PC-9 (cell line): ENCODE measurements at regions of chr2 and their contacts with region 1.

Region 1: GRCh38 chr2:31762085-31762484 is 181.3 kb upstream of the SRD5A2 start:
- DNase-seq: no peak
- H3K4me3 ChIP-seq: no peak overlapping the region
- H3K27ac ChIP-seq: no peak overlapping the region
- H3K4me1 ChIP-seq: no peaks in the 10 kb centered on the region
- H3K27me3 ChIP-seq: no peaks in the 10 kb centered on the region
- CTCF ChIP-seq: no peak

Region 2: DNA sequence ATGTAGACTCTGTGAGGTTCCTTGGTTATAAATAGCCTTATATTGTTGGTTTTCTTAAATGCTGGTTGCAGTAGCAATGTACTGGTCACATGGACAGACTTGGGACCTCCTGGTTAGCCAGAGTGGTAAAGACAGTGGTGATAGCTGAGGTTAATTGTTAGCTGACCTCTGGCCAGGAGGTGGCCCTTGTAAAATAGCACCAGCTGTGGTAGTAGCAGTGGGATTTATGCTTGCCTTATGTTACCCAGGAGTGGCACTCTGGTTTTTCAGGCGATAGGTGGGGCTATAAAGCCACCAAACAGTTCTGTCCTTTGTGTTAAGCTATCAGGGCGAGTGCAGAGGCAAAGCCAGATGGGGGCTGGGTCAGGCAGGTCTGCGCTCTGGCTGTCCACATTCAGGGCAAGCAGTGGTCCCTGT is 86.6 kb before region 1 on chr2:
- CTCF ChIA-PET with region 1: no interaction called
- POLR2A ChIA-PET with region 1: no interaction called
- intact Hi-C with region 1: no loop called
- DNase-seq: peak in 1 of 2 experiments; percentile 6
- H3K4me3 ChIP-seq: no peak overlapping the region
- H3K27ac ChIP-seq: no peak overlapping the region
- H3K4me1 ChIP-seq: no peaks in the 10 kb centered on the region
- H3K27me3 ChIP-seq: no peaks in the 10 kb centered on the region
- CTCF ChIP-seq: 0 out of 2 replicates have a peak, but pooled peaks have one; percentile 26

Region 3: DNA sequence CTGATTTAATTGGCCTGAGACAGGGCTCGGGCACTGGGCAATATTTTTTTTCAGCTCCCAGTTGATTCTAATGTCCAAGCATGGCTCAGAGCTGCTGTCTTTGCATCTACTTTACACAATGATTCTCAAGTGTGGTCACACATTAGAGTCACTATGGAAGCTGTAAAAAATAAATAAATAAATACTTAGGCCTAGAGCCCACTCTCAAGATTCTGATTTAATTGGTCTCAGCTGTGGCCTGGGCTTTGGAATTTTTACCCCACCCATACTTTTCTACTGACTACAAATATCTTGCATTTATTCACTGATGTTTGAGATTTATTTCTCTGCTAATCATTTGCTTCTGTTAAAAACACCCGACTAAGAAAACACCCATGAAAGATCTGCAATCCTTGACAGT is 35.6 kb before region 1 on chr2:
- CTCF ChIA-PET with region 1: no interaction called
- POLR2A ChIA-PET with region 1: no interaction called
- intact Hi-C with region 1: no loop called
- DNase-seq: no peak
- H3K4me3 ChIP-seq: no peak overlapping the region
- H3K27ac ChIP-seq: no peak overlapping the region
- H3K4me1 ChIP-seq: 0 out of 2 replicates have a peak, but pooled peaks cover 6% of the 10 kb centered on the region
- H3K27me3 ChIP-seq: no peaks in the 10 kb centered on the region
- CTCF ChIP-seq: no peak

Region 4: DNA sequence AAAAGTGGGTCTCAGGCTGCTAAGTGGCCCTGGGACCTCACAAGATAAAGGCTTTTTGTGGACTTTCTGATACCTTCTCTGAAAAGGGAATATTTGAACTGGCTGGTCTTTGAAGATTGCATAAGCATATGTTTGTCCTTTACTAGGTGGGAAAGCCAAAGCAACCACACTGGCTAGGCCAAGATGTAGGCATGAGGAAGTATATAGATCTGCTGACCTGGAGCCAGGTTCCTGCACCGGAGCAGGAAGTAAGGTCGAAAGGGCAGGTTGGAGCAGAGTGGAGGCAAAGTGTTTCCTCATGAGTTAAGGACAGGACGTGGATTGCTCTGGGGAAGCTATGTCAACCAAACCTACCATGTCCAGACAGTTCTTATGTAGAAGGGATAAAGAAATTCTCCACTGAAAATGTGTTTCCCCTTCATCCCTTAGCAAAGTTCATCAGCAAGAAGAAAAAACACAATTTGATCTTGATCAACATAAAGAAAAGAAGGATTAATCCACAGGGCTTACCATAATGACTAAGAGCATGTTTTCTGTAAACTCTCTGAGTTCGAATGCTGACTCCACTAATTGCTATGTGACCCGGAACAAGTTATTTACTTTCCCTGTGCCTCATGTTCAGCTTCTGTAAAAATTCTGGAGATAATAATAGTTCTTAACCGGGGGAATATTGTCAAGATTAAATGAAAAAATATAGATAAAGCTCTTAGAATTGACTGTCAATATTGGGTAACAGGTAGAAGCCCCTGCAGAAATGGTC is 25.2 kb before region 1 on chr2:
- CTCF ChIA-PET with region 1: no interaction called
- POLR2A ChIA-PET with region 1: no interaction called
- intact Hi-C with region 1: no loop called
- DNase-seq: peak in 1 of 2 experiments; percentile 60
- H3K4me3 ChIP-seq: no peak overlapping the region
- H3K27ac ChIP-seq: no peak overlapping the region
- H3K4me1 ChIP-seq: peaks cover 16% of the 10 kb centered on the region
- H3K27me3 ChIP-seq: no peaks in the 10 kb centered on the region
- CTCF ChIP-seq: no peak

Region 5: DNA sequence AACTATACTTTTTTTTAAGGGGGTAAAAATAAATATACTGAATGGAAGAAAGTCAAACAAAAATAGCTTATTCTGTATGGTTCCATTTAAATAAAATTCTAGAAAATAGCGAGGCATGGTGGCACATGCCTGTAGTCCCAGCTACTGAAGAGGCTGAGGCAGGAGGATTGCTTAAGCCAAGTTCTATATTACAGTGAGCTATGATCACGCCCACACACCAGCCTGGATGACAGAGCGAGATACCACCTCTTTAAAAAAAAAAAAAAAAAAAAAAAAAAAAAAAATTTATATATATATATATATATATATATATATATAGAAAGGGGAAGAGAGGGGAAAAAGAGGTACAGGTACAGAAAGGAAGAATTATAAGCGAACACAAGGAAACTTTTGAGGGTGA is 171.0 kb after region 1 on chr2:
- CTCF ChIA-PET with region 1: no interaction called
- POLR2A ChIA-PET with region 1: no interaction called
- intact Hi-C with region 1: no loop called
- DNase-seq: no peak
- H3K4me3 ChIP-seq: no peak overlapping the region
- H3K27ac ChIP-seq: no peak overlapping the region
- H3K4me1 ChIP-seq: no peaks in the 10 kb centered on the region
- H3K27me3 ChIP-seq: no peaks in the 10 kb centered on the region
- CTCF ChIP-seq: no peak

Region 6: DNA sequence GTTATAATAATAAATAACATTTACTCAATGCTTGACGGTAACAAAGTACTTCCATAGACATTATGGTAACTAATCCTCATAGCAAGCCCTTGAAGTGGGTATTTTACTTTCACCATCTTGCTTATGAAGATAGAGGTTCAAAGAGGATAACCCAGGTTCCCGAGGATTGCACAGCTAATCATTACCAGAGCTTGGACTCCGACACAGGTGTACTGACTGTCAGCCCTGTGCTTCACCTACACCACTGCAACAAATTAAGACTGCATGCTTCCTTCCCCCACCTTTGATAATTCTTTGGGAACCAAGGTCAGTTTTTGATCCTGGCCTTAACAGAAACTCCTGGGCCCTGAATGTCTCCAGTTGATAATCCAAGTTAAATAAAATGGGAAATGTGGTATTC is 1788.1 kb after region 1 on chr2:
- CTCF ChIA-PET with region 1: interaction called, 13 read pairs
- POLR2A ChIA-PET with region 1: no interaction called
- intact Hi-C with region 1: no loop called
- DNase-seq: no peak
- H3K4me3 ChIP-seq: no peak overlapping the region
- H3K27ac ChIP-seq: no peak overlapping the region
- H3K4me1 ChIP-seq: no peaks in the 10 kb centered on the region
- H3K27me3 ChIP-seq: no peaks in the 10 kb centered on the region
- CTCF ChIP-seq: no peak